K562 (cell line): ENCODE measurements at regions of chr2 and their contacts with region 1.

Region 1: DNA sequence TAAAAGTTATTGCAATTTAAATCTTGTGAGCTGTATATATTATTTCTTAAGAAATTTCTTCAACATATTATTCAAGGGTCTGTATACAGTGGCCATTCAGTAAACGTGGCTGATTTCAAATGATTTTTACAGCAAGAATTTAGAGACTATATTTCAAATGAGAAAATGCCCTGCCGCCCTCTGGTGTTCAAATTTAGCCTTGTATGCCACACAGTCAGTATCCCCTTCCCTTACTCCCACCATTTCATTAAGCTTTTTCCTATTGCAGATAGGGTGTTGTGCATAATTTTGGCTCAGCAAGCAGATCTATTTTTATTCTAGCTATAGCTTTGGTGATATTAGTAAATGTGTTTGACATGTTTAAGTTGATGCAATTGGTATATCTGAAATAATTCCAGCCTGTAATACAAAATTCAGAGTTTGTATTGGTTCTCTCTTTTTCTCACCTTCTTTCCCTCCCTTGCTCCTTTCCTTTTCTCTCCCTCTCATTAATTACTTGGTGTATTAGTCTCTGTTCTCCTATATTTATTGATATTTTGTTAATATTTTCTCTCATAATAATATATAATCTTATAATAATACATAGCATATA is 22.8 kb upstream of the SCN7A start:
- DNase-seq: peak; percentile 13 to 50 (median 24)
- ATAC-seq: peak; percentile 87
- H3K4me3 ChIP-seq: no peak overlapping the region
- H3K27ac ChIP-seq: no peak overlapping the region
- H3K4me1 ChIP-seq: no peaks in the 10 kb centered on the region
- H3K27me3 ChIP-seq: no peaks in the 10 kb centered on the region
- CTCF ChIP-seq: peak; percentile 37 to 68 (median 48); a peak in 4 of 6 replicates
- EP300 ChIP-seq: no peak
- POLR2A ChIP-seq: no peak
- RAD21 ChIP-seq: peak; percentile 64 to 66

Region 2: GRCh38 chr2:166057370-166058164 is 459.2 kb before region 1 on chr2:
- CTCF ChIA-PET with region 1: interaction called, 4 read pairs
- POLR2A ChIA-PET with region 1: no interaction called
- in situ Hi-C with region 1: no loop called
- intact Hi-C with region 1: loop called (anchors 5 kb)
- DNase-seq: peak; percentile 12 to 42 (median 16)
- ATAC-seq: no peak
- H3K4me3 ChIP-seq: no peak overlapping the region
- H3K27ac ChIP-seq: no peak overlapping the region
- H3K4me1 ChIP-seq: no peaks in the 10 kb centered on the region
- H3K27me3 ChIP-seq: no peaks in the 10 kb centered on the region
- CTCF ChIP-seq: peak in 2 of 3 experiments; percentile 39 to 71; a peak in 3 of 6 replicates
- EP300 ChIP-seq: no peak
- POLR2A ChIP-seq: no peak
- RAD21 ChIP-seq: peak; percentile 56 to 67

Region 3: DNA sequence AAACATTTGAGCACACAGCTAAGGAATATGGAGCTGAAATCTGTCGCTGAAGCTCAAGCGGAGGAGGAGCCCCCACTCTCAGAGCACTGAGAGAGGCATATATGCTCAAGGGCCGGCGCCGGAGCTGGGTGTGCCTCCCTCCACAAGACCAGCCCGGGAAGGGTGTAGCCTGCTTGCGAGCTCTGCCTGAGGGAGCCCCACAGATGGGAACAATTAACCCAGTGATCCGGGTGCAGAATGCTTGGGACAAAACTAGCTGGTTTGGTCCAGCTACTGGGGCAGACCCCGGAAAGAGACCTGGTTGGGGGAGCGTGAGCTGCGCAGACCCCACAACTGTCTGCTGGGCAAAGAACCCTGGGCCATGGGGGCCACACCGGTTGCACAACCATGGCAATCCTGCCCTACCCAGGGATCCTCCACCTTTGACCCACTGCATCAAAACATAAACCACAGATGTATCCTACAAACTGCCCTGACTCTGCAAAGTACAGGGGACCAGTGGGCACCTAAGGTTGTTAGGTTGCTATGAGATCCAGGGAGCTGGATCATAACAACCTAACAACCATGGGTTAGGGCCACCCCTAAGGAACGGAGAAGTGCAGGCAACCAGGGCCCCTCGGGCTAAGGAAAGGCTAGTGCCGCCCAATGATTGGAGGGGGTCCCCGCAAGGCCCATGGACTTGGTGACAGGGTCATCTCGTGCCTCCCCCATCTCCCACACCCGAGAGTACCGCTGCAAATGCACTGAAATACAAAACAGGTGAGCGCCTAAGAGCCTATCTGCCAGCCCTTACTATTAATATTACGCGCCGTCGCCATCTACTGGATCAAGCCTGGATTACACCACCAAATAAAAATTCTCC is 335.6 kb before region 1 on chr2:
- CTCF ChIA-PET with region 1: interaction called, 8 read pairs
- POLR2A ChIA-PET with region 1: no interaction called
- in situ Hi-C with region 1: no loop called
- intact Hi-C with region 1: loop called (anchors 1 kb)
- DNase-seq: peak; percentile 39 to 66 (median 45)
- ATAC-seq: peak; percentile 89
- H3K4me3 ChIP-seq: no peak overlapping the region
- H3K27ac ChIP-seq: no peak overlapping the region
- H3K4me1 ChIP-seq: no peaks in the 10 kb centered on the region
- H3K27me3 ChIP-seq: peaks cover 0 to 7% of the 10 kb centered on the region in 2 experiments; a peak in 1 of 5 replicates
- CTCF ChIP-seq: peak; percentile 61 to 69 (median 65)
- EP300 ChIP-seq: no peak
- POLR2A ChIP-seq: no peak
- RAD21 ChIP-seq: peak; percentile 36 to 58

Region 4: GRCh38 chr2:166361351-166362153 is 155.3 kb before region 1 on chr2:
- CTCF ChIA-PET with region 1: no interaction called
- POLR2A ChIA-PET with region 1: no interaction called
- in situ Hi-C with region 1: no loop called
- intact Hi-C with region 1: loop called (anchors 5 kb)
- DNase-seq: peak in 2 of 4 experiments; percentile 23 to 65
- ATAC-seq: peak; percentile 67
- H3K4me3 ChIP-seq: no peak overlapping the region
- H3K27ac ChIP-seq: peak overlapping the region; percentile 34; the same call in 2 of the 3 replicates
- H3K4me1 ChIP-seq: peaks cover 9 to 60% of the 10 kb centered on the region in 2 experiments
- H3K27me3 ChIP-seq: no peaks in the 10 kb centered on the region
- CTCF ChIP-seq: peak; percentile 55 to 82 (median 69); a peak in 5 of 6 replicates
- EP300 ChIP-seq: no peak
- POLR2A ChIP-seq: no peak
- RAD21 ChIP-seq: peak; percentile 70 to 87

Region 5: GRCh38 chr2:166394245-166394644 is 122.6 kb before region 1 on chr2:
- CTCF ChIA-PET with region 1: no interaction called
- POLR2A ChIA-PET with region 1: no interaction called
- in situ Hi-C with region 1: no loop called
- intact Hi-C with region 1: no loop called
- DNase-seq: no peak
- ATAC-seq: no peak
- H3K4me3 ChIP-seq: no peak overlapping the region
- H3K27ac ChIP-seq: no peak overlapping the region
- H3K4me1 ChIP-seq: peaks cover 0 to 10% of the 10 kb centered on the region in 2 experiments; a peak in 2 of 5 replicates
- H3K27me3 ChIP-seq: no peaks in the 10 kb centered on the region
- CTCF ChIP-seq: no peak
- EP300 ChIP-seq: no peak
- POLR2A ChIP-seq: no peak
- RAD21 ChIP-seq: no peak

Region 6: DNA sequence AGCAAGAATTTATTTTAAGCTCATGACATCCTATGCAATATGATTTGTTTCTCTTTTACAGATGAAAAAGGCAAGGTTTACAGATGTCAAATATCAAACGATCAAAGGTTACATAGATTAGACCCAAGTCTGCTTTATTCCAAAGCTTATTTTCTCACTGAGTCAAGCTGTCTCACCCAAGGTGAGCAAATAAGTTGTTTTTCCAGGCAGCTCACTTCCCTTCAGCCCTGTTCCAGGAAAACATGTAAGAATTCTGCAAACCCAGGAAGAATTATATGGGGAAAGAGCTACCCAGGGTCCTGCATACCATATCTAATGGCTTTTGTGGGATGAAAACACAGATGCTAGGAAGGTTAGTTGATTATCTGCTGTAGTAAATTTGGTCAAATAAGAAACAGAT is 83.4 kb before region 1 on chr2:
- CTCF ChIA-PET with region 1: no interaction called
- POLR2A ChIA-PET with region 1: no interaction called
- in situ Hi-C with region 1: no loop called
- intact Hi-C with region 1: loop called (anchors 5 kb)
- DNase-seq: no peak
- ATAC-seq: no peak
- H3K4me3 ChIP-seq: no peak overlapping the region
- H3K27ac ChIP-seq: no peak overlapping the region
- H3K4me1 ChIP-seq: no peaks in the 10 kb centered on the region
- H3K27me3 ChIP-seq: no peaks in the 10 kb centered on the region
- CTCF ChIP-seq: no peak
- EP300 ChIP-seq: no peak
- POLR2A ChIP-seq: no peak
- RAD21 ChIP-seq: no peak